PC-3 (cell line): ENCODE measurements at regions of chr3 and their contacts with region 1.

Region 1: GRCh38 chr3:120095226-120095978 is 1.2 kb upstream of the GSK3B start:
- DNase-seq: peak; percentile 98
- ATAC-seq: peak; percentile 58
- H3K4me3 ChIP-seq: peak overlapping the region; percentile 95
- H3K27ac ChIP-seq: peak overlapping the region; percentile 95
- H3K4me1 ChIP-seq: peaks cover 16% of the 10 kb centered on the region
- H3K27me3 ChIP-seq: no peaks in the 10 kb centered on the region
- CTCF ChIP-seq: no peak

Region 2: GRCh38 chr3:119912220-119912619 is 183.2 kb before region 1 on chr3:
- CTCF ChIA-PET with region 1: no interaction called
- POLR2A ChIA-PET with region 1: no interaction called
- intact Hi-C with region 1: loop called (anchors 2 kb)
- DNase-seq: peak; percentile 44
- ATAC-seq: no peak
- H3K4me3 ChIP-seq: no peak overlapping the region
- H3K27ac ChIP-seq: peak overlapping the region; percentile 57
- H3K4me1 ChIP-seq: peaks cover 22% of the 10 kb centered on the region
- H3K27me3 ChIP-seq: no peaks in the 10 kb centered on the region
- CTCF ChIP-seq: no peak

Region 3: DNA sequence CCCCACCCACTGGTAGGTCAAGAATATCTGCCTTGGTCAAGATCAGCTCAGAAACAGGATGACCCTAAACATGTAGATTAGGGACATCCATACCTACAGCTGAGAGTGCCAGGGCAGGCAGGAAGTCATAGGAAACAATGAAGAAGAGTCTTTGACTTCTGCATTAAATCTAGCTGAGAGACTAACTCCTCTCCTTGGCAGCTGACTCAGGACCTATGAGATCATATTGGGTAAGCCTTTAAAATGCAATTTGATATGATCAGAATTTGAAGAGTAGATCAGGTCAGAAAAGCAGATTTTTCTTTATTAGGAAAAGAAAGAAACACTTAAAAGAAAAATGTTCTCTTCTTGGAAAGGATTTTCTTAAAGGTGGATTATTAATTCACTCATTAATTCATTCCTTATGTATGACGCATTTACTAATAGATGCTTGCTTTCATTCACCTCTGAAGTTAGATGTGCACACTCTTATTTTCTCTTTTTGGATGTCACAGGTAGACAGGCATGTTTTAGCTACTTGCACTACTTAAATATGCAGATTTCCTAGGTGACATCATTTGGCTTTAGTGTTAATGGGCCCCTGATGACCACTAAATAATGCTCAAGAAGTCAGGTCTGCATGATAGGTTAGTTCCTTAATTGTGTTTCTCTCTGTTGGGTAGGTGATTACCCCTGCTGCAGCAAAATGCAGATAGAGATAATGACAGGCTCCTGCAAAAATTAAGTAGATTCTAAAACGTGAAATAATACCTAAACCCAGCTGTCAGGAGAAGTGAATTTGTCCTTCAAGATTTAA is 34.5 kb after region 1 on chr3:
- CTCF ChIA-PET with region 1: no interaction called
- POLR2A ChIA-PET with region 1: no interaction called
- intact Hi-C with region 1: loop called (anchors 1 kb)
- DNase-seq: peak; percentile 72
- ATAC-seq: peak; percentile 84
- H3K4me3 ChIP-seq: no peak overlapping the region
- H3K27ac ChIP-seq: no peak overlapping the region
- H3K4me1 ChIP-seq: peaks cover 12% of the 10 kb centered on the region
- H3K27me3 ChIP-seq: no peaks in the 10 kb centered on the region
- CTCF ChIP-seq: no peak

Region 4: GRCh38 chr3:120160050-120160449 is 64.6 kb after region 1 on chr3:
- CTCF ChIA-PET with region 1: no interaction called
- POLR2A ChIA-PET with region 1: interaction called, 15 read pairs
- intact Hi-C with region 1: loop called (anchors 1 kb)
- DNase-seq: peak; percentile 99
- ATAC-seq: peak; percentile 88
- H3K4me3 ChIP-seq: no peak overlapping the region
- H3K27ac ChIP-seq: peak overlapping the region; percentile 69
- H3K4me1 ChIP-seq: peaks cover 26% of the 10 kb centered on the region
- H3K27me3 ChIP-seq: no peaks in the 10 kb centered on the region
- CTCF ChIP-seq: no peak

Region 5: GRCh38 chr3:120182724-120183524 is 87.5 kb after region 1 on chr3:
- CTCF ChIA-PET with region 1: interaction called, 3 read pairs
- POLR2A ChIA-PET with region 1: interaction called, 7 read pairs
- intact Hi-C with region 1: loop called (anchors 1 kb)
- DNase-seq: peak; percentile 67
- ATAC-seq: peak; percentile 68
- H3K4me3 ChIP-seq: no peak overlapping the region
- H3K27ac ChIP-seq: no peak overlapping the region
- H3K4me1 ChIP-seq: peaks cover 32% of the 10 kb centered on the region
- H3K27me3 ChIP-seq: no peaks in the 10 kb centered on the region
- CTCF ChIP-seq: peak; percentile 91

Region 6: GRCh38 chr3:120438665-120439370 is 343.4 kb after region 1 on chr3:
- CTCF ChIA-PET with region 1: no interaction called
- POLR2A ChIA-PET with region 1: interaction called, 17 read pairs
- intact Hi-C with region 1: no loop called
- DNase-seq: peak; percentile 89
- ATAC-seq: peak; percentile 77
- H3K4me3 ChIP-seq: peak overlapping the region; percentile 8; the same call in 1 of the 2 replicates
- H3K27ac ChIP-seq: peak overlapping the region; percentile 74
- H3K4me1 ChIP-seq: peaks cover 79% of the 10 kb centered on the region
- H3K27me3 ChIP-seq: no peaks in the 10 kb centered on the region
- CTCF ChIP-seq: no peak